HAP-1 (cell line): ENCODE measurements at regions of chr5 and their contacts with region 1.

Region 1: DNA sequence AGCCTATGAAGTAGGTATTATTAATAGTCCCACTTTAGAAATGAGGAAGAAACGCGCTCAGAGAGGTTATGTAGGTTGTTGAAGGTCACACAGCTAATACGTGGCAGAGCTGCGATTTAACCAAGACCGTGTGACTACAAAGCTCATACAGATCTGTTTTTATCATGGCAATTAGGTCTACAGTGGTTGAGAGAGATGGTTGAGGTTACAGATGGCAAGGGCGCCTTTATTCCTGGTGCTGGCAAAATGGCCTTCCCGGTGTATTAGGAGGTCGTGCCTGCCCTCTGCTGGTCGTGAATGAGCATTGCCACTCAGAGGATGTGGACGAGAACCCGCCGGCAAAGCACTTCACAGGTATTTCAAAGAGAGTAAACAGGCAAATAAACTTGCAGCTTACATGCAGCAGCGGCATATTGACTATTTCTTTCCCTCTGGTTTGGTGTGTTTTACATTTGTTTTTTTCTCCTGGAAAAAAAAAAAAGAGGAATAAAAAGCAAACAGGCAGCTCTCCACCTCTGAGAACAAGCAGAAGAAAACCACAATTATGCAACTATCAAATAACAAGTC is 65.3 kb upstream of the EGFLAM start:
- DNase-seq: peak; percentile 48 to 77
- H3K4me3 ChIP-seq: no peak overlapping the region
- H3K4me1 ChIP-seq: no peaks in the 10 kb centered on the region
- H3K27me3 ChIP-seq: peaks cover 5% of the 10 kb centered on the region; the same call in 1 of the 2 replicates

Region 2: DNA sequence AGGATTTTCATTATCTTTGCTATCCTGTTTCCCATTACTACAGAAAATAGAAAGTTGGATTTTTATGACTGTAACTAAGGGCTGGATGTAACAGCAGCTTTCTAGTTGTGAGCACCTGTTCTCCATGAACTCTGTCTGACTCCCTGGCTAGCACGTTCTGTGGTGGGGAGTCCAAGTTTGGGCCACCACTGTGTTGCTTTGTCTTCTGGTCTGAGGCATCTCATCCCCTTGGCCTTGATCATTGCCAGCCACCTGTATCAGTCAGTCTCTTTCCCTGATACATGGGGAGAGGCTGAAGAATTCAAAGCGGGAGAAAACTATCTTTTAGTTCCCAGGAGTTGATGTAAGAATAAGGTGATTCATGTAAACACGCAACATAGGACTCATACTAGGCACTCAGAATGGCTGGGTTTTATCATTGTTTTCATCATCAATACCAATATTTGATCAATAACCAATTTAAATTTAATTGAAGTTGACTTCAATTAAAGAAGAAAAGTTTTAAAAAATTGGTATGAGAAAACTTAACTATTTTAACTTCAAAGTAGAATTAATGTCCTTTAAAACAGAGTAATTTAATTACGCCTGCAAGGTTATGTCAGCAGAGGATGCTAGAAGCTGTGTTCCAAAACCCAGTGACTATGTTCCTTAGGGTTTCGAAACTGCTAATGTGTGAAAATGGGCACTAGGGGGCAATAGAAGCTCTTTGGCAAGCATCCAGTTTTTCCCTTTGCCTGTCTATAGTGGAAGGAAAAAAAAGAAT is 780.4 kb before region 1 on chr5:
- in situ Hi-C with region 1: loop called (anchors 10 kb)
- DNase-seq: peak; percentile 71 to 77
- H3K4me3 ChIP-seq: no peak overlapping the region
- H3K4me1 ChIP-seq: no peaks in the 10 kb centered on the region
- H3K27me3 ChIP-seq: no peaks in the 10 kb centered on the region

Region 3: DNA sequence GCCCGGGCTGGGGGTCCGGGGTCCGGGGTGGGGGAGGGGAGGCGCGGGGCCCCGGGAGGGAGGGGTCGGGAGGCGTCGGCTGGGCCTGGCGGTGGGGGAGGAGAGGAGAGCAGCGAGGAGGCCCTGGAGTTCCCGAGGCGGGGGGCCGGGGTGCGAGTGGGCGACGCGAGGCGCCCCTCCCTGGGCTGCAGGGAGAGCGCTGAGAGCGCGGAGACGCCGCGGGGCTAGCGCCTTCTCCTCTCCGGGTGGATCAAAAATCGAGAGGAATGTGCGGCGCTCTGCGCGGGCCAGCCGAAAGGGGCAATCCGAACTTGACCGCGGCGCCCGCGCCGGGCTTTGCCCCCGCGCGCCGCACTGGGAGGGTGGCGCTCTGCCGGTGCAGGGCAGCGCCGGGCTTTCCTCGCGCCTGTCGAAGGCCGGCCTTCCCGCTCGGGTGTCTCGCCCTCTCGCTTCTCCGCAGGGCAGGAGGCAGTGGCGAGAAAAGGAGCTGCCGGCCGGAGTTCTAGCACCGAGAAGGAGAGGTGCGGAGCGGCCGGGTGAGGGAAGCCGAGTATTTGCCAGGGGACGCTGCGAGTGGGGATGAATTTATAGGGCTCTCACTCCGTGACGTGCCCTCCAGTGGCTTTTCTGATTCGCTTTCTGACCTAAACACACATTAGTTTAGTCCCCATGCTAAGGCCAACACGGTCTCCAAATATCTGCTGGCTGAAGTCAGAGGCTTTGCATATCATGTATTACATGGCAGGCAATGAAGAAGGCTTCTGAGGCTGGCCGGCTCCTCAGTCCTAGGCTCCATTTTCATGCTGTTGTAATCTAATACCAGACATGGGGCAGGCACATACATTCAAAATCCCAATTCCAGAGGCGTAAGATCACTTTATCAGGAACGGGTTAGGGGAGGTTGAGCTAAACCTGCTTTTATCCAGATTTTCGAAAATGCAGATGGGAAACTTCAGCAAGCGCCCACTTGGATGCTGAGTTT is 352.8 kb before region 1 on chr5:
- in situ Hi-C with region 1: loop called (anchors 10 kb)
- DNase-seq: no peak
- H3K4me3 ChIP-seq: no peak overlapping the region
- H3K4me1 ChIP-seq: no peaks in the 10 kb centered on the region
- H3K27me3 ChIP-seq: peaks cover 70% of the 10 kb centered on the region

Region 4: DNA sequence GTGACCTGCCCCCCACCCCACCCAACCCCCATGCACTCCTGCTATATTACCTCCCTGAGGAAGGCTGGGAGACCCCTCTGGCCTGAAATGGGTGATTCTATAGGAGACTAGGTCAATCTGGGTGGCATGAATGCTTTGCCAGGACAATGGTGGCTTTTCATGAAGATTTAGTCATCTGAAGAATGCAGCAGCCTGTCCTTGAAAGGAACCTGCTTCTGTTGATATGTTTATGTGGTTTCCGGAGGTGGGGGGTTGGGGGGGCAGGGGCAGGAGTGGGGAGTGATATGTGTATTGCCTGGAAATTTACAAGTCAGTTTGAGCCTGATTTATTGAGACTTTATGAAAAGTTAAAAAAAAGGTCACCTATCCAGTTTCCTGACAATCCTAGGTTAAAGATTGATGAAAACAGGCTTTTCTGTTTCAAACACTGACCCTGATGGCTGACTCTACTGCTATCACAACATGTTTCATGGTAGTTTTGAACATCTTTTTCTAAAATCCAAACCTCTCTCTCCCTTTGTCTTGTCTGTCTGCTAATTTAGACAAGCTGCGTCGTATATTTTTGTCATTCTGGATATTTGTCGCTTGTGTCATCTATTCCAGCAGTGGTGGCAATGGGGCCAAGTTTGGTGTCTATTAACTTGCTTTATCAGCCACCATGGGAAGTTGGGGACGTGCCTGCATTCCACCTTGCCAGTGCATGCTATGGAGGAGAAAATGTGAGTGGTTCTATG is 88.4 kb before region 1 on chr5:
- in situ Hi-C with region 1: no loop called
- DNase-seq: peak; percentile 41 to 51
- H3K4me3 ChIP-seq: no peak overlapping the region
- H3K4me1 ChIP-seq: peaks cover 6% of the 10 kb centered on the region
- H3K27me3 ChIP-seq: no peaks in the 10 kb centered on the region